PC-9 (cell line): ENCODE measurements at regions of chr19 and their contacts with region 1.

Region 1: DNA sequence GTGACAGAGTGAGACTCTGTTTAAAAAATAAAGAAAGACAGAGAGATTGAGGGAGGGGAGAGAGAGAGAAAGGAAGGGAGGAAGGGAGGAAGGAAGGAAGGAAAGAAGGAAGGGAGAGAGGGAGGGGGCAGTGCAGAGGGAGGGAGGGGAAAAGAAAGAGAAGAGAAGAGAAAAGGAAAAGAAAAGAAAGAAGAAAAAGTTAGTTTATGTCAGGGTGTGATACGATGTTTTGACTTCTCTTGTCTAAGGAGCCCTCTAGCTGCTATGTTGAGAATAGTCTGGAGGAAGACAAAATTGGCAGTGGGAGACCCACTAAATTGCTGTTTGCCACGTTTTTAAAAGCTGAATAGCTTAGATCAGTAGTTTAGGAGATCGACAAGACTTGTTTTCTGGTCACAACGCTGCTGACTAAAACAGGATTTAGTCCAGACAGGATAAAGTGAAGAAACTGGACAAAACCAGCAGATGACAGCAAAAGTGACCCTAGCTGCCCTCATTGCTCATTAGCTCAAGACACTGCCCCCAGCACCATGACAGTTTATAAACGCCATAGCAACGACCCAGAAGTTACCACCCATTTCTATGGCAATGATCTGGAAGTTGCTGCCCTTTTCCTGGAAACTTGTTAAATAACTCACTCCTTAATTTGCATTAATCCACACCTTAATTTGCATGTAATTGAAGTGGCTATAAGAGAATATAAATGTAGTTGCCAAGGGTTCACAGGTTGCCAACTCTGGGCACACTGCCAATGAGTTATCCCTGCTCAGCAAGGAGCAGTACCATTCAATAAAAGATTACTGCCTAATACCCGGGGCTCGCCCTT is 11.1 kb downstream of the TEX101 start:
- DNase-seq: peak; percentile 35 to 58
- H3K4me3 ChIP-seq: no peak overlapping the region; the same call in 1 of the 2 replicates
- H3K27ac ChIP-seq: peak overlapping the region; percentile 44
- H3K4me1 ChIP-seq: peaks cover 48% of the 10 kb centered on the region
- H3K27me3 ChIP-seq: no peaks in the 10 kb centered on the region
- CTCF ChIP-seq: peak; percentile 82

Region 2: GRCh38 chr19:43305658-43306057 is 120.1 kb before region 1 on chr19:
- CTCF ChIA-PET with region 1: interaction called, 11 read pairs
- POLR2A ChIA-PET with region 1: no interaction called
- intact Hi-C with region 1: no loop called
- DNase-seq: no peak
- H3K4me3 ChIP-seq: no peak overlapping the region
- H3K27ac ChIP-seq: peak overlapping the region; percentile 68
- H3K4me1 ChIP-seq: peaks cover 53% of the 10 kb centered on the region
- H3K27me3 ChIP-seq: no peaks in the 10 kb centered on the region
- CTCF ChIP-seq: peak; percentile 43; the same call in 1 of the 2 replicates

Region 3: DNA sequence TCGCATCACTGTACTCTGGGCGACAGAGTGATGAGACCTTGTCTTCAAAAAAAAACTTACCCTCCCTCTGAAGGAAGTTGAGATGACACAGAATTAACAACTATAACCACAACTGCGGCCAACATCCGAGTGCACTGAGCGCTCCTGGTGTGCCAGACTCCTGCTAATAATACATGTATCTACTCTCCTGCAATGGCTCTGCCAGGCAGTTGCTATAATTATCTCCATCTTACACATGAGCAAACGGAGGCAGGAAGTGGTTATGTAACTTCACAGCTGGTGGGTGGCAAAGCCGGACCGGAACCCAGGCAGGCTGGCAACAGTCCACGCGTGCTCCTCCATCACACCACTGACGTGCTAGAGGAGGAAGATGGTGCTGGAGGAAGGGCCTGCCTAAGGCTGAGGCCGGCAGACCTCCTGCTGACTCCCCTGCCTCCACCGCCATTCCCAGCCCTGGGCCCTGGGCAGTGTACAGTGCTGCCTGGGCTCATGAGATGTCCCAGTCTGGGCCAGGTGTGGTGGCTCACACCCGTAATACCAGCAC is 137.0 kb after region 1 on chr19:
- CTCF ChIA-PET with region 1: no interaction called
- POLR2A ChIA-PET with region 1: no interaction called
- intact Hi-C with region 1: no loop called
- DNase-seq: no peak
- H3K4me3 ChIP-seq: no peak overlapping the region
- H3K27ac ChIP-seq: no peak overlapping the region
- H3K4me1 ChIP-seq: no peaks in the 10 kb centered on the region
- H3K27me3 ChIP-seq: no peaks in the 10 kb centered on the region
- CTCF ChIP-seq: no peak

Region 4: GRCh38 chr19:43606569-43607229 is 180.9 kb after region 1 on chr19:
- CTCF ChIA-PET with region 1: no interaction called
- POLR2A ChIA-PET with region 1: interaction called, 11 read pairs
- intact Hi-C with region 1: no loop called
- DNase-seq: no peak
- H3K4me3 ChIP-seq: no peak overlapping the region
- H3K27ac ChIP-seq: no peak overlapping the region
- H3K4me1 ChIP-seq: no peaks in the 10 kb centered on the region
- H3K27me3 ChIP-seq: no peaks in the 10 kb centered on the region
- CTCF ChIP-seq: no peak

Region 5: GRCh38 chr19:43809762-43810696 is 384.2 kb after region 1 on chr19:
- CTCF ChIA-PET with region 1: no interaction called
- POLR2A ChIA-PET with region 1: no interaction called
- intact Hi-C with region 1: loop called (anchors 5 kb)
- DNase-seq: peak in 1 of 2 experiments; percentile 66
- H3K4me3 ChIP-seq: no peak overlapping the region
- H3K27ac ChIP-seq: no peak overlapping the region
- H3K4me1 ChIP-seq: peaks cover 7% of the 10 kb centered on the region
- H3K27me3 ChIP-seq: no peaks in the 10 kb centered on the region
- CTCF ChIP-seq: peak; percentile 77